IMR-90 (cell line): ENCODE measurements at regions of chr20 and their contacts with region 1.

Region 1: GRCh38 chr20:19692685-19693119 is 65.4 kb upstream of the RIN2 start:
- DNase-seq: peak; percentile 22
- ATAC-seq: peak; percentile 41; the same call in 1 of the 2 replicates
- H3K4me3 ChIP-seq: no peak overlapping the region
- H3K27ac ChIP-seq: no peak overlapping the region
- H3K4me1 ChIP-seq: peaks cover 4% of the 10 kb centered on the region; the same call in 1 of the 2 replicates
- H3K27me3 ChIP-seq: no peaks in the 10 kb centered on the region
- CTCF ChIP-seq: peak; percentile 81
- POLR2A ChIP-seq: no peak
- RAD21 ChIP-seq: peak; percentile 73

Region 2: GRCh38 chr20:19757487-19758132 is 64.9 kb after region 1 on chr20:
- CTCF ChIA-PET with region 1: no interaction called
- POLR2A ChIA-PET with region 1: no interaction called
- dilution Hi-C with region 1: no loop called
- in situ Hi-C with region 1: no loop called
- intact Hi-C with region 1: loop called (anchors 5 kb)
- DNase-seq: peak; percentile 87
- ATAC-seq: peak; percentile 88
- H3K4me3 ChIP-seq: peak overlapping the region; percentile 72
- H3K27ac ChIP-seq: peak overlapping the region; percentile 78
- H3K4me1 ChIP-seq: peaks cover 8% of the 10 kb centered on the region
- H3K27me3 ChIP-seq: no peaks in the 10 kb centered on the region
- CTCF ChIP-seq: no peak
- POLR2A ChIP-seq: no peak
- RAD21 ChIP-seq: no peak; the same call in 1 of the 2 replicates

Region 3: DNA sequence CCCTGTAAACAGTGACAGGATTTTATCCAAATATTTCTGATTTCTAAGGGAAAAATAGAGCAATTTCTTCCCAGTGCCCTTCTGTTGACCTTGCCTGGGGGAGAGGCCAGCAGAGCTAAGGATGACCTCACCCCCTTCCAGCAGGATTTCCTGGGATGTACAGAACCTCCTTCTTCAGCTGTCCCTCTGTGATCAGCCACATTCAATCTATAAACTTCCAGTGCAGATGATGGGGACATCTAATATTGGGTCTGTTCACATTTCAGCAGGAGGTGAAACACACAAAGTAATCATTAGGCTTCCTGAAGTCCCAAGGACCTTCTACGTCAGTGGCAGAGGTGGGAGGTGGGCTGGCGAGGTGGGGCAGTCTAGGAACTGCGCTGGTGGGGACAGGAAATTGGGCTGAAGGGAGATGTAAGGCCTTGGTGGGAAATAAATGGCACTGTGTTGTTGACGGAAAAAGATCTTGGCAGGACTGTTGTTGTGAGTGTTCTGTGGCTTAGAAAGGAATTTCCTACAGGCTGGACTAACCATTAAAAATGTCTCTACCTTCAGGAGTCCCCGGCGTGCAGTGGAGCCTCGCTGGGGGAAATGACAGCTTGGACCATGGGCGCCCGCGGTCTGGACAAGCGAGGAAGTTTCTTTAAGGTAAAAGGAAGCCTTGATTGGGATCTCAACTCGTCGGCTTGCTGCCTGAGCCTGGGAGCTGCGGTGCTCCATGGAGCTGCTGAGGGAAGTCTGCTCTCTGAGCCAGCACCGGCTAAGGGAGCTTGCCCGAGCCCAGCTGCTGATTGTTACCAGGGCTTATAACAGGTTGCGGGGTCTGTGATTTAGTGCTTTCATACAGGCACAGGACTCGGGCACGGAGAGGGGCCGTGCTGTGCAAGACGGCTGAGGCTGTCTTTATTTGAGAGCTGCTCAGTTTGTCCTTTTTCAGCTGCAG is 196.6 kb after region 1 on chr20:
- CTCF ChIA-PET with region 1: interaction called, 3 read pairs
- POLR2A ChIA-PET with region 1: interaction called, 14 read pairs
- dilution Hi-C with region 1: no loop called
- in situ Hi-C with region 1: loop called (anchors 10 kb)
- intact Hi-C with region 1: loop called (anchors 2 kb)
- DNase-seq: peak; percentile 76
- ATAC-seq: peak; percentile 46
- H3K4me3 ChIP-seq: peak overlapping the region; percentile 57
- H3K27ac ChIP-seq: peak overlapping the region; percentile 100
- H3K4me1 ChIP-seq: peaks cover 33% of the 10 kb centered on the region
- H3K27me3 ChIP-seq: no peaks in the 10 kb centered on the region
- CTCF ChIP-seq: no peak
- POLR2A ChIP-seq: no peak
- RAD21 ChIP-seq: no peak

Region 4: DNA sequence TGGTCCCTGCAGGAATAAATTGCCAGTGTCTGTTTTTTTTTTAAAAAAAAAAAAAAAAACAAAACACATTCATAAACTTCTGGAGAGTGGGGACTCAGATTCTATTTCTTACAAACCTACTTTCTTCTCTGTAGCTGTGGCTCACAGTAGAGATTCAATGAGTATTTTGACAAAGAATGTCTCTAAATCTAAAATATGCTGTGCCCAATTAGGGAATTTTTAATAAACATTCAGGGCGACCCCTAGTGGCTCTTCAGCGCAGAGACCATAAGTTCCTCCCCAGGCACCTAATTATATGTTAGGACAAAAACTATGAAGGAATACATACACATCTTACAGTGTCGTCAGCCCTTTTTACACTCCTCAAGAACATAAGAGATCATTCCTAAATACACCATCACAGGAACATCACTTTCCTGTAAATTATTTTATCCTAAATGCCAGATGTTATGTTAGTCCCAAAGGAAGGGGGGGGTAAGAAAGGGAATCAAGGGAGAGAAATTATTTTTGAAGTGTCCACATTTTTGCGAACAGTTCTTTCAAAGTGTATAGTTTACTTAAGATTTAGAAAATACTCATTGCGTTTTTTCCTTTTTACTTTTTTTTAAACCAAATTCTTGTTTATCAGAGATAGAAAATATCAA is 302.6 kb after region 1 on chr20:
- CTCF ChIA-PET with region 1: no interaction called
- POLR2A ChIA-PET with region 1: no interaction called
- dilution Hi-C with region 1: no loop called
- in situ Hi-C with region 1: loop called (anchors 5 kb)
- intact Hi-C with region 1: loop called (anchors 1 kb)
- DNase-seq: peak; percentile 64
- ATAC-seq: peak; percentile 21
- H3K4me3 ChIP-seq: no peak overlapping the region
- H3K27ac ChIP-seq: peak overlapping the region; percentile 79; the same call in 1 of the 2 replicates
- H3K4me1 ChIP-seq: peaks cover 28% of the 10 kb centered on the region
- H3K27me3 ChIP-seq: no peaks in the 10 kb centered on the region
- CTCF ChIP-seq: peak; percentile 81
- POLR2A ChIP-seq: no peak
- RAD21 ChIP-seq: peak; percentile 70

Region 5: GRCh38 chr20:20052074-20052970 is 359.6 kb after region 1 on chr20 and contains the starts of genes CFAP61 and CRNKL1:
- CTCF ChIA-PET with region 1: no interaction called
- POLR2A ChIA-PET with region 1: no interaction called
- dilution Hi-C with region 1: no loop called
- in situ Hi-C with region 1: no loop called
- intact Hi-C with region 1: loop called (anchors 1 kb)
- DNase-seq: peak; percentile 95
- ATAC-seq: peak; percentile 97
- H3K4me3 ChIP-seq: peak within 1 kb of the TSS; percentile 67
- H3K27ac ChIP-seq: peak within 1 kb of the TSS; percentile 75
- H3K4me1 ChIP-seq: no peaks in the 10 kb centered on the region
- H3K27me3 ChIP-seq: peaks cover 2% of the 10 kb centered on the region; the same call in 1 of the 2 replicates
- CTCF ChIP-seq: no peak
- POLR2A ChIP-seq: no peak
- RAD21 ChIP-seq: peak; percentile 18; the same call in 1 of the 2 replicates
- total RNA-seq, gene CFAP61: under 0.01 TPM in 1 of 2 replicates, not detected in the other
- total RNA-seq, gene CRNKL1: 20.1 and 33.9 TPM in 2 replicates

Region 6: GRCh38 chr20:20073801-20074371 is 381.2 kb after region 1 on chr20:
- CTCF ChIA-PET with region 1: no interaction called
- POLR2A ChIA-PET with region 1: no interaction called
- dilution Hi-C with region 1: no loop called
- in situ Hi-C with region 1: no loop called
- intact Hi-C with region 1: no loop called
- DNase-seq: no peak
- ATAC-seq: peak; percentile 29
- H3K4me3 ChIP-seq: no peak overlapping the region; the same call in 1 of the 2 replicates
- H3K27ac ChIP-seq: no peak overlapping the region
- H3K4me1 ChIP-seq: no peaks in the 10 kb centered on the region
- H3K27me3 ChIP-seq: peaks cover 27% of the 10 kb centered on the region
- CTCF ChIP-seq: no peak
- POLR2A ChIP-seq: no peak
- RAD21 ChIP-seq: no peak

Region 7: DNA sequence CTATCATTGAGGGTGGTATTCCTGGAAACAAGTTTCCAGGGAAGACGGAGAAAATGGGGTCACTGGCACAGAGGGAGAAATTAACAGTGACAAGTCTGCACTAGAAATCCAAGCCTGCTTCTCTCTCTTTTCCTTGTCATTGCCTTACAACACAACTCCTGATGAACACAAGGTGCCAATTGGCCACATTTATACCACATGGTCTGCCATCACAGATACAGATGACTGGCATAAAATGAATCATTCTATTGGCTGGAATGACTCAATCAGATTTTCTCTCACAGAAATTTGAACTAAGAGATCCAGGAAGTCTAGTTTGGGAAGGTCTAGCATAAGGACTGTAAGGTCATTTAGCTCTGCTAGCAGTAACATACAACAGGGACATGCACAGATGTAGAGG is 1223.1 kb after region 1 on chr20:
- CTCF ChIA-PET with region 1: no interaction called
- POLR2A ChIA-PET with region 1: no interaction called
- dilution Hi-C with region 1: no loop called
- in situ Hi-C with region 1: no loop called
- intact Hi-C with region 1: no loop called
- DNase-seq: no peak
- ATAC-seq: no peak
- H3K4me3 ChIP-seq: no peak overlapping the region
- H3K27ac ChIP-seq: no peak overlapping the region
- H3K4me1 ChIP-seq: no peaks in the 10 kb centered on the region
- H3K27me3 ChIP-seq: no peaks in the 10 kb centered on the region
- CTCF ChIP-seq: no peak
- POLR2A ChIP-seq: no peak
- RAD21 ChIP-seq: no peak